ENCODE measurements at regions of chr11 and their contacts with region 1.

Region 1: GRCh38 chr11:65506770-65507505 is 8.1 kb downstream of the MALAT1 start:
- DNase-seq: peak; percentile 74
- H3K4me3 ChIP-seq: peak overlapping the region in 2 of 4 donors; percentile 74 to 86
- H3K27ac ChIP-seq: peak overlapping the region; percentile 98 to 100 (median 99)
- H3K4me1 ChIP-seq: peaks cover 5 to 60% (median 39%) of the 10 kb centered on the region in 4 donors
- H3K27me3 ChIP-seq: no peaks in the 10 kb centered on the region
- CTCF ChIP-seq: no peak
- EP300 ChIP-seq: no peak
- POLR2A ChIP-seq: peak; percentile 80

Region 2: DNA sequence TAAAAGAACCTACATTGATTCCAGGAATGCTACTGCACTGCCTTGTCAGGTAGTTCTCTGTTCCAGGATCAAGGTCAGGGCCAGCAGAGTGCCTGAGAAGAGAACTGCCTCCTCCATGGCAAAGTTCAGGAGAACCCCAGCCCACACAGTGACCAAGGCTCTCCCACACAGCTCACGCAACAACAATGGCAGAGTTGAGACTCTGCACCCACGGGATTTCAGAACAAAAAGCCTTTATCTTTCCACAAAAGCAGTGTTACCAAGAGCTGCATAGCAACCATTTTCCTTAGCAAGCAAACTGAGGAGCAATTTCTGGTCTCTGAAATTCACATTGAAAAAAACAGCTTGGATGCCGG is 1903.8 kb before region 1 on chr11:
- in situ Hi-C with region 1: no loop called
- intact Hi-C with region 1: no loop called
- DNase-seq: no peak
- H3K4me3 ChIP-seq: no peak overlapping the region
- H3K27ac ChIP-seq: peak overlapping the region in 2 of 4 donors; percentile 13 to 37
- H3K4me1 ChIP-seq: peaks cover 0 to 5% (median 2%) of the 10 kb centered on the region in 4 donors
- H3K27me3 ChIP-seq: no peaks in the 10 kb centered on the region
- CTCF ChIP-seq: no peak
- EP300 ChIP-seq: no peak
- POLR2A ChIP-seq: no peak

Region 3: DNA sequence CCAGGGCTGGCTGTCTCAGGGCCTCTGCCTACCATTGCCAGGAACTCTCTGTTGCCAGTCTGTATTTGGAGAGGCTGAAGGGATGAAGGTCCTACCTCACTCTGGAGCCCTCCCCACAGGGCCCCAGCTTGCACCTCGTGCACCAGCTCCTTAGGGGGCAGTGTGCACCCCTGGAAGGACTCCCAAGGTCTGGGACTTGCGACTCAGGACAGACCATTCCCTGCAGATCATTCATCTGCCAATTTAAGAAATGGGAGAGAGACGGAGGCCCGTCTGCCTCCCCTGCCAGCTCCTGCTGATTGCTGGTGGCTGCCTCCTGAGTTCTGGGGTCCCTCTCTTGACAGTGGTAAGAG is 35.6 kb before region 1 on chr11:
- in situ Hi-C with region 1: loop called in 1 of 4 experiments (anchors 5 kb)
- intact Hi-C with region 1: loop called (anchors 5 kb)
- DNase-seq: peak; percentile 78
- H3K4me3 ChIP-seq: peak overlapping the region in 2 of 4 donors; percentile 7 to 33
- H3K27ac ChIP-seq: peak overlapping the region; percentile 92 to 100 (median 97)
- H3K4me1 ChIP-seq: peaks cover 22 to 66% (median 40%) of the 10 kb centered on the region in 4 donors
- H3K27me3 ChIP-seq: no peaks in the 10 kb centered on the region
- CTCF ChIP-seq: peak; percentile 56 to 70 (median 65)
- EP300 ChIP-seq: peak; percentile 16
- POLR2A ChIP-seq: no peak

Region 4: DNA sequence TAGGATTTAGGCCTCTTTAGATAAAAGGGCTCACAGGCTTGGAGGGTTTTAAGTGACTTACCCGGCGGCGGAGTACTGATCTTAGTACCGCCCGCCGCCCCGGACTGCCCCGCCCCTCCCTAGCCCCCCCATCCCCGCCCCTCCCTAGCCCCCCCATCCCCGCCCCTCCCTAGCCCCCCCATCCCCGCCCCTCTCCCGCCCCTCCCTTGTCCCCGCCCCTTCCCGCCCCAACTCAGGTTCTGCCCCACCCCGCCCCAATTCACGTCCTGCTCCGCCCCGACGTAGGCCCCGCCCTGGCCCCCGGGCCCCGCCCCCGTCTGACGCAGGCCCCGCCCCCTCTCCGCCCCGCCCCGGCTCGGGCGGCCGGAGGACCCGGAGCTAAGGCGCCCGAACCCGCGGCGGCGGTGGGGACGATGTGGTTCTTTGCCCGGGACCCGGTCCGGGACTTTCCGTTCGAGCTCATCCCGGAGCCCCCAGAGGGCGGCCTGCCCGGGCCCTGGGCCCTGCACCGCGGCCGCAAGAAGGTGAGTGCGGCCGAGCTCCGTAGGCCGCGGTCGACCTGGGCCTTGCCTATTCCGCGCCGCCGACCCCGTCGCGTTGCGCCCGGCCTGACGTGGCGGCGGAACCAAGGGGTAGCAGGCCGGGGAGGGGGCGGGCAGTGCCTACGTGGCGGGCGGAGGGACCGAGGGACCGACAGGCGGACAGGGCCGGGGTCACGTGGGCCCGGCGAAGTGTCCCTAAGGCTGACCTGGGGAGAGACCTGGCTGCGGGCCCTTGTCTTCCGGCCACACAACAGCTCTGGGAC is 18.0 kb after region 1 on chr11 and contains the start of gene SCYL1:
- in situ Hi-C with region 1: no loop called
- intact Hi-C with region 1: no loop called
- DNase-seq: peak; percentile 88
- H3K4me3 ChIP-seq: peak within 1 kb of the TSS; percentile 76 to 99 (median 82)
- H3K27ac ChIP-seq: peak within 1 kb of the TSS; percentile 91 to 93 (median 92)
- H3K4me1 ChIP-seq: peaks cover 11 to 37% (median 24%) of the 10 kb centered on the region in 4 donors
- H3K27me3 ChIP-seq: no peaks in the 10 kb centered on the region
- CTCF ChIP-seq: no peak
- EP300 ChIP-seq: no peak
- POLR2A ChIP-seq: peak; percentile 60
- total RNA-seq, gene SCYL1: 41.0 to 78.4 (median 69.2) TPM